GM23248 (cell line): ENCODE measurements at regions of chr11 and their contacts with region 1.

Region 1: GRCh38 chr11:14537134-14537599 is 17.0 kb upstream of the PSMA1 start:
- DNase-seq: peak; percentile 53
- H3K4me3 ChIP-seq: no peak overlapping the region
- H3K27ac ChIP-seq: no peak overlapping the region
- H3K4me1 ChIP-seq: no peaks in the 10 kb centered on the region
- H3K27me3 ChIP-seq: no peaks in the 10 kb centered on the region

Region 2: GRCh38 chr11:13889552-13890249 is 647.5 kb before region 1 on chr11:
- in situ Hi-C with region 1: no loop called
- DNase-seq: no peak
- H3K4me3 ChIP-seq: no peak overlapping the region
- H3K27ac ChIP-seq: no peak overlapping the region
- H3K4me1 ChIP-seq: no peaks in the 10 kb centered on the region
- H3K27me3 ChIP-seq: 0 out of 2 replicates have a peak, but pooled peaks cover 3% of the 10 kb centered on the region

Region 3: GRCh38 chr11:14132312-14132711 is 404.9 kb before region 1 on chr11:
- in situ Hi-C with region 1: no loop called
- DNase-seq: no peak
- H3K4me3 ChIP-seq: no peak overlapping the region
- H3K27ac ChIP-seq: no peak overlapping the region
- H3K4me1 ChIP-seq: no peaks in the 10 kb centered on the region
- H3K27me3 ChIP-seq: no peaks in the 10 kb centered on the region

Region 4: DNA sequence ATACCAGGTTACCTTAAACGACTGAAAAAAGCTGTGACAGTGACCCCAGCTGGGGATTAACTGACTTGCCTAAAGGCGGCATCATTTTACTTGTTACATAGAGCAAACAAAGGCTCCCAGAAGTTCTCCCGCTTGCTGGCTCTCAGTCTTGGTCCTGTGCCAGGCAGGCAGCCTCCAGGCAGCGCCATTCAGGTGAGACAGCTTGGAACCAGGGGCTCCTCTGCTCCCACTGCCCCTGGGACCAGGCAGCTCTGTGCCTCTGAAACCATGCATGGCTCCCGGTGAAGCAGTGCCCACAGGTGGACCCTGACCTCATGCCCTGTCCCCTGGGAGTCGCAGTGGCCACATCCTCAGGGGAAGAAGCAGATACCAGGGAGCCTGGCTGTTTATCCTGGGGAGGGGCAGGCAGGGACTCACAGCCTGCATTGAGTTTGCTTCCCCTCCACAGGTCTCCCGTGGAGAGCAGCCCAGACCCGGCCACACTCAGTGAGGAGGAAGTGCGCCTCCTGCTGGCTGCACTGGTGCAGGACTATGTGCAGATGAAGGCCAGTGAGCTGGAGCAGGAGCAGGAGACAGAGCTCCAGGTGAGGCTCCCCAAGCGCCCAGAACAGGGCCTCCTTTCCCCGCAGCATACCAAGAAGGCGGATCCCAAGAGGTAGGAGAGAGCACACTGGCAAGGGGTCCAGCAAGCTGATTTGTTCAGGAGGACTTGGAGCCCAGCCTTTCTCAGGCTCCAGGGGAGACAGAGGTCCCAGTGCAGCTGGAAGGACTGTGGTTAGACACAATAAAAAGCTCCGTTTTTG is 370.4 kb after region 1 on chr11:
- in situ Hi-C with region 1: loop called (anchors 25 kb)
- DNase-seq: peak; percentile 69
- H3K4me3 ChIP-seq: no peak overlapping the region
- H3K27ac ChIP-seq: no peak overlapping the region
- H3K4me1 ChIP-seq: no peaks in the 10 kb centered on the region; the same call in 1 of the 2 replicates
- H3K27me3 ChIP-seq: peaks cover 13% of the 10 kb centered on the region